ENCODE measurements at regions of chr22 and their contacts with region 1.

Region 1: DNA sequence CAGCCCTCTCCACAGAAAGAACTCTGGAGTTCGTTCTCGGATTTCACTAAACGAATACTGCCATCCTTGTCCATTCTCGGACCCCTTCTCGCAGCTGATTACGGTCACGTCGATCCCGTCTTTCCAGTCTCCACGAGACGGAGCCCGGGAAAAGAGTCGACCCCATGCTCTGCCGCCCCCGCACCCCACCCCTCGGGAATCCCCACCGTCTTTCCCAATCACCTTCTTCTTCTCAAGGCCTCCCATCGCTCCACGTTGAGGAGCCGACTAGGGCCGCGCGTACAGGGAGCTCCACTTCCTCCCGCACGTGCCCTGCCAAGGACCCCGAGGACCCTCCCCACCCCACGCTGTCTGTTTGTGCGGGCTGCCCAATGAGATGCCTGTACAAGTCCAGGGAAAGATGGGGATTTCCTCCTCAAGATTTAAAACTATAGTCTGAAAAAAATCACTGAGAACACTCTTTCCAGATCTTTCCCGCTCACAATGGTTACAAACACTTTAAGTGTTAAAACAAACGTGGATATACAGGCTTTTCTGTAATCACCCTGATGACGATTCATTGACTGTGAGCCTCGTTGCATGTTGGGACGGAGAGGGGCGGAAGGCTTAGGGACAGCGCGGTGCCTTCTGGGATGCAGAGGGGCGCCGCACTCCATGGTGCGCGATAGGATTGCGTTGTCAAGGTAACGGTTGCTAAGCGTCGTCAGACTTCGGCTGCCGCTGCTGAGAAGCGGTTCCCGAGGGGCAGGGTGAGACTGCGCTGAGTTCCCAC is at the start of gene PES1:
- DNase-seq: peak; percentile 80 to 98 (median 96)
- ATAC-seq: peak; percentile 99
- H3K4me3 ChIP-seq: peak within 1 kb of the TSS; percentile 85
- H3K4me3 Mint-ChIP-seq: no peak within 1 kb of the TSS
- H3K27ac ChIP-seq: peak within 1 kb of the TSS; percentile 85
- H3K27ac Mint-ChIP-seq: no peak within 1 kb of the TSS
- H3K4me1 ChIP-seq: peaks cover 8 to 12% of the 10 kb centered on the region in 2 donors
- H3K4me1 Mint-ChIP-seq: peaks cover 0 to 12% (median 0%) of the 10 kb centered on the region in 7 donors
- H3K27me3 ChIP-seq: no peaks in the 10 kb centered on the region
- H3K27me3 Mint-ChIP-seq: peaks cover 0 to 23% (median 0%) of the 10 kb centered on the region in 5 donors
- total RNA-seq, gene PES1: 40.6 to 84.2 (median 56.3) TPM

Region 2: DNA sequence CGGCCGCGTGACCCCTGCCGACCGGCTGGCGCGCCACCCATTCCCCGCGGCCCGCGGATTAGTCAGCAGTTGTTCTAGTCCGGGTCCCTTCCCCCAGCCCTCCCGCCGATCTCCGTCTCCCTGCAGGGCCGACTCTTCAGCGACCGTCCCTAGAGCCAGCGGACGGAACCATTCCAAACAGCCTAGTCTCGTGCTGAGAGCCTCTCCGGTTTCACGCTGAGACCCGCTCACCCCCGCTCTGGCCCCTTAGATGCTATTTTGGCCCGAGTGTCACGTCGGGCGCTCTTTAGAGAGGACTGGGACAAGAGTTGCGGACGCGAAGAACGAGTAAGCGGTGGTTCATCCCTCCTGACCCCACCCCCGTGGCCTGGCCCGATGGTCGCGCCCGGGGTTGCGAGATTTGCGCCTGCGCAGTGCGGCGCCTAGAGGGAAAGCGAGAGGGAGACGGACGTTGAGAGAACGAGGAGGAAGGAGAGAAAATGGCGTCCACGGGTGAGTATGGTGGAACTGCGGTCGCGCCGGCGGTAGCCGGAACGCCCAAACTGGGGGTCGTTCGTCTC is 1323.8 kb before region 1 on chr22 and contains the starts of genes EWSR1 and RHBDD3:
- CTCF ChIA-PET with region 1: no interaction called
- POLR2A ChIA-PET with region 1: no interaction called
- intact Hi-C with region 1: loop called in 1 of 2 experiments (anchors 5 kb)
- DNase-seq: peak; percentile 90 to 100 (median 97)
- ATAC-seq: peak; percentile 94
- H3K4me3 ChIP-seq: peak within 1 kb of the TSS; percentile 96
- H3K4me3 Mint-ChIP-seq: peak within 1 kb of the TSS; percentile 93 to 100 (median 96)
- H3K27ac ChIP-seq: peak within 1 kb of the TSS; percentile 98
- H3K27ac Mint-ChIP-seq: peak within 1 kb of the TSS; percentile 97 to 100 (median 99)
- H3K4me1 ChIP-seq: peaks cover 39 to 41% of the 10 kb centered on the region in 2 donors
- H3K4me1 Mint-ChIP-seq: peaks cover 44 to 59% (median 54%) of the 10 kb centered on the region in 7 donors
- H3K27me3 ChIP-seq: no peaks in the 10 kb centered on the region
- H3K27me3 Mint-ChIP-seq: peaks cover 0 to 5% (median 0%) of the 10 kb centered on the region in 5 donors
- total RNA-seq, gene EWSR1: 249 to 366 (median 273) TPM
- total RNA-seq, gene RHBDD3: 10.8 to 39.4 (median 14.7) TPM

Region 3: GRCh38 chr22:30262917-30263741 is 328.6 kb before region 1 on chr22:
- CTCF ChIA-PET with region 1: no interaction called
- POLR2A ChIA-PET with region 1: no interaction called
- intact Hi-C with region 1: loop called (anchors 2 to 5 kb)
- DNase-seq: peak; percentile 58 to 87 (median 70)
- ATAC-seq: peak; percentile 28
- H3K4me3 ChIP-seq: no peak overlapping the region
- H3K4me3 Mint-ChIP-seq: peak overlapping the region; percentile 32 to 94 (median 48)
- H3K27ac ChIP-seq: no peak overlapping the region
- H3K27ac Mint-ChIP-seq: peak overlapping the region in 8 of 9 donors; percentile 7 to 87 (median 68)
- H3K4me1 ChIP-seq: peaks cover 27 to 38% of the 10 kb centered on the region in 2 donors
- H3K4me1 Mint-ChIP-seq: peaks cover 21 to 57% (median 39%) of the 10 kb centered on the region in 7 donors
- H3K27me3 ChIP-seq: no peaks in the 10 kb centered on the region
- H3K27me3 Mint-ChIP-seq: no peaks in the 10 kb centered on the region

Region 4: GRCh38 chr22:30606455-30607299 is 14.9 kb after region 1 on chr22 and contains the start of gene TCN2:
- CTCF ChIA-PET with region 1: interaction called, 3 read pairs
- POLR2A ChIA-PET with region 1: interaction called, 8 read pairs
- intact Hi-C with region 1: loop called (anchors 1 to 2 kb)
- DNase-seq: peak in 8 of 9 donors; percentile 8 to 42 (median 22)
- ATAC-seq: peak; percentile 70
- H3K4me3 ChIP-seq: peak within 1 kb of the TSS; percentile 81
- H3K4me3 Mint-ChIP-seq: peak within 1 kb of the TSS; percentile 75 to 95 (median 90)
- H3K27ac ChIP-seq: peak within 1 kb of the TSS; percentile 56
- H3K27ac Mint-ChIP-seq: peak within 1 kb of the TSS; percentile 47 to 86 (median 67)
- H3K4me1 ChIP-seq: peaks cover 0 to 6% of the 10 kb centered on the region in 2 donors
- H3K4me1 Mint-ChIP-seq: peaks cover 24 to 59% (median 28%) of the 10 kb centered on the region in 7 donors
- H3K27me3 ChIP-seq: no peaks in the 10 kb centered on the region
- H3K27me3 Mint-ChIP-seq: no peaks in the 10 kb centered on the region
- total RNA-seq, gene TCN2: 0.57 to 8.9 (median 1.3) TPM

Region 5: GRCh38 chr22:30617819-30618218 is 26.0 kb after region 1 on chr22:
- CTCF ChIA-PET with region 1: no interaction called
- POLR2A ChIA-PET with region 1: no interaction called
- intact Hi-C with region 1: no loop called
- DNase-seq: no peak
- ATAC-seq: no peak
- H3K4me3 ChIP-seq: no peak overlapping the region
- H3K4me3 Mint-ChIP-seq: no peak overlapping the region
- H3K27ac ChIP-seq: no peak overlapping the region
- H3K27ac Mint-ChIP-seq: no peak overlapping the region
- H3K4me1 ChIP-seq: no peaks in the 10 kb centered on the region
- H3K4me1 Mint-ChIP-seq: peaks cover 0 to 2% (median 0%) of the 10 kb centered on the region in 7 donors
- H3K27me3 ChIP-seq: no peaks in the 10 kb centered on the region
- H3K27me3 Mint-ChIP-seq: no peaks in the 10 kb centered on the region

Region 6: DNA sequence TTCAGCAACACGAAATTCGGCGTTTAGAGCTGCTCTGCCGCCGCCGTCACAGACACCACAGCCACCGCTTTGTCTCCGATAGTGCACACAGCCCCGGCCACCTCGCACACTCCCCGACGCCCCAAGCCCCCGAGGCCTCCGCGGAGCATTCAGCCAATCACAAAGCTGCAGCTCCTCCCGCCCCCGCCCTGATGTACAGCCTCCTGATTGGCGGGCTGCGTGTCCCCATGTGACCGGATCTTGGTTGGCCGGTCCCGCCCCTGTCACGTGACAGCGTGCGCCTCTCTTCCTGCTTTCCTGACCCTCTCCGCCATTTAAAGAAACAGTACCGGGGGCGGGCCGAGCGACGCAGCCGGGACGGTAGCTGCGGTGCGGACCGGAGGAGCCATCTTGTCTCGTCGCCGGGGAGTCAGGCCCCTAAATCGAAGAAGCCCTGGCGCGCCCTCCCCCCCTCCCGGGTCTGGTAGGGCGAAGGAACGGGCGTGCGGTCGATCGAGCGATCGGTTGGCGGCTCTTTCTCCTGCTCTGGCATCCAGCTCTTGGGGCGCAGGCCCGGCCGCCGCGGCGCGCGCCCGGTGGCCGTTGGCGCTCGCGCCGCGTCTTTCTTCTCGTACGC is 377.3 kb after region 1 on chr22 and contains the start of gene TUG1:
- CTCF ChIA-PET with region 1: no interaction called
- POLR2A ChIA-PET with region 1: no interaction called
- intact Hi-C with region 1: loop called (anchors 1 to 2 kb)
- DNase-seq: peak; percentile 88 to 98 (median 97)
- ATAC-seq: peak; percentile 96
- H3K4me3 ChIP-seq: peak within 1 kb of the TSS; percentile 59
- H3K4me3 Mint-ChIP-seq: peak within 1 kb of the TSS; percentile 90 to 96 (median 93)
- H3K27ac ChIP-seq: peak within 1 kb of the TSS; percentile 94
- H3K27ac Mint-ChIP-seq: peak within 1 kb of the TSS; percentile 90 to 98 (median 97)
- H3K4me1 ChIP-seq: peaks cover 22 to 23% of the 10 kb centered on the region in 2 donors
- H3K4me1 Mint-ChIP-seq: peaks cover 12 to 67% (median 58%) of the 10 kb centered on the region in 7 donors
- H3K27me3 ChIP-seq: no peaks in the 10 kb centered on the region
- H3K27me3 Mint-ChIP-seq: peaks cover 0 to 4% (median 0%) of the 10 kb centered on the region in 5 donors
- total RNA-seq, gene TUG1: 82.7 to 159 (median 113) TPM

Region 7: GRCh38 chr22:31345331-31346254 is 753.8 kb after region 1 on chr22:
- CTCF ChIA-PET with region 1: no interaction called
- POLR2A ChIA-PET with region 1: no interaction called
- intact Hi-C with region 1: loop called in 1 of 2 experiments (anchors 5 kb)
- DNase-seq: peak; percentile 91 to 95 (median 93)
- ATAC-seq: peak; percentile 83
- H3K4me3 ChIP-seq: peak overlapping the region; percentile 60
- H3K4me3 Mint-ChIP-seq: peak overlapping the region; percentile 85 to 91 (median 88)
- H3K27ac ChIP-seq: peak overlapping the region; percentile 74
- H3K27ac Mint-ChIP-seq: peak overlapping the region; percentile 81 to 97 (median 92)
- H3K4me1 ChIP-seq: peaks cover 26 to 42% of the 10 kb centered on the region in 2 donors
- H3K4me1 Mint-ChIP-seq: peaks cover 32 to 57% (median 48%) of the 10 kb centered on the region in 7 donors
- H3K27me3 ChIP-seq: no peaks in the 10 kb centered on the region
- H3K27me3 Mint-ChIP-seq: peaks cover 0 to 4% (median 0%) of the 10 kb centered on the region in 5 donors

Measured in naive thymus-derived CD4-positive, alpha-beta T cell (primary cell).